Aorta (tissue), 5 donors: ENCODE measurements at regions of chr4 and their contacts with region 1.

Region 1: GRCh38 chr4:121252224-121252806 is 88.2 kb upstream of the TNIP3 start:
- DNase-seq: peak; percentile 67 to 76
- ATAC-seq: peak; percentile 76
- H3K4me3 ChIP-seq: no peak overlapping the region
- H3K27ac ChIP-seq: no peak overlapping the region
- H3K4me1 ChIP-seq: no peaks in the 10 kb centered on the region
- H3K27me3 ChIP-seq: no peaks in the 10 kb centered on the region

Region 2: GRCh38 chr4:121122661-121123060 is 129.7 kb before region 1 on chr4:
- intact Hi-C with region 1: no loop called
- DNase-seq: no peak
- ATAC-seq: no peak
- H3K4me3 ChIP-seq: no peak overlapping the region
- H3K27ac ChIP-seq: no peak overlapping the region
- H3K4me1 ChIP-seq: no peaks in the 10 kb centered on the region
- H3K27me3 ChIP-seq: no peaks in the 10 kb centered on the region

Region 3: DNA sequence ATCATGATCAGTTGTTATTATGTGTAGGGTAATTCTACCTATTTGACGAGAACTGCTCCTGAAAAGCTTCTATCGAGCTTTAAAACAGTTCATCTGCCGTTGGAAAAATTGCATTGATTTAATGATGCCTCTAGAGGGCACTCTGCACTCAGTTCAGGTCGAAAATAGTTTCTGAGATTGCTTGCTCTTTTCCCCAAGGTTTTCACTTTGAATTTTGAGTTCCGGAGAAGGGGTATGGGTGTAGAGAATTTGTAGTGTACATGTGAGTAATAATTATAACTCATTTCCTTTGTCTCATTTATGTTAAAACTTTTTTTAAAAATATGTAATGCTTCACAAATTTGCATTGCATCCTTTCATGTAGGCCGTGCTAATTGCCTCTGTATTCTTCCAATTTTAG is 59.8 kb before region 1 on chr4:
- intact Hi-C with region 1: loop called in 1 of 2 experiments (anchors 5 kb)
- DNase-seq: no peak
- ATAC-seq: no peak
- H3K4me3 ChIP-seq: no peak overlapping the region
- H3K27ac ChIP-seq: no peak overlapping the region
- H3K4me1 ChIP-seq: no peaks in the 10 kb centered on the region
- H3K27me3 ChIP-seq: no peaks in the 10 kb centered on the region